Upper lobe of right lung (tissue), 1 donor: ENCODE measurements at regions of chr1 and their contacts with region 1.

Region 1: GRCh38 chr1:235415008-235415904 is 48.0 kb downstream of the TBCE start:
- DNase-seq: peak; percentile 70
- ATAC-seq: peak; percentile 96
- H3K4me3 ChIP-seq: no peak overlapping the region
- H3K27ac ChIP-seq: no peak overlapping the region
- H3K4me1 ChIP-seq: no peaks in the 10 kb centered on the region
- H3K27me3 ChIP-seq: no peaks in the 10 kb centered on the region
- CTCF ChIP-seq: peak; percentile 82

Region 2: GRCh38 chr1:234486498-234487448 is 928.5 kb before region 1 on chr1:
- intact Hi-C with region 1: loop called (anchors 10 kb)
- DNase-seq: no peak
- ATAC-seq: peak; percentile 85
- H3K4me3 ChIP-seq: no peak overlapping the region
- H3K27ac ChIP-seq: no peak overlapping the region
- H3K4me1 ChIP-seq: peaks cover 9% of the 10 kb centered on the region
- H3K27me3 ChIP-seq: no peaks in the 10 kb centered on the region
- CTCF ChIP-seq: peak; percentile 65

Region 3: DNA sequence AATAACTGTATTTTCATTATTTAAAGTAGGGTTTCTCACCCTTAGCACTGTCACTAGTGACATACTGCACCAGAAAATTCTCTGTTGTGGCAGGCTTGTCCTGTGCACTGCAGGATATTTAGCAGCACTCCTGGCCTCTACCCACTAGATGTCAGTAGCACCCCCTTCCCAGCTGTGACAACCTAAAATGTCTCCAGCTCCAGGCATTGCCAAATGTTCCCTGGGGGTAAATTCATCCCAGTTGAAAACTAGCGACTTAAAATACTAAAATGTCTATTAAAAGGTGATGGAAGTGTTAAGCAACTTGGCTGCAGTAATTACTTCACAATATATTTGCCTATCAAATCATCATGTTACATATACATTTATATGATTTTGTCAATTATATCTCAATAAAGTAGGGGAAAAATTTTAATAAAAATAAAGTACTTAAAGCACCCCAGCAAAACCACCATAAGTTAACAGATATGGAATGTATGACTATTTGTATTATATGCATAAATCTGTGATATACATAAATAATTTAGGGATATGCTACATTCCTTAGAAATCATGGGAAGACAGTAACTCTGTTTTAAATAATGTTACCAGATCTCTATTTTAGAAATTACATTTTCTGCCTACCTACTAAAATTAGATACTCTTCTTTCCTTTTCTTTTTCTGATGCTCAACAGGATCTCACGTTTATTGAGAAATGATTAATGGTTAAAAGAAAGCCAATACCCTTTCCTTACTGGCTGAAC is 161.9 kb before region 1 on chr1:
- intact Hi-C with region 1: loop called (anchors 10 kb)
- DNase-seq: no peak
- ATAC-seq: peak; percentile 98
- H3K4me3 ChIP-seq: no peak overlapping the region
- H3K27ac ChIP-seq: no peak overlapping the region
- H3K4me1 ChIP-seq: peaks cover 7% of the 10 kb centered on the region
- H3K27me3 ChIP-seq: no peaks in the 10 kb centered on the region
- CTCF ChIP-seq: peak; percentile 88